Transverse colon (tissue), 4 donors: ENCODE measurements at regions of chr3 and their contacts with region 1.

Region 1: DNA sequence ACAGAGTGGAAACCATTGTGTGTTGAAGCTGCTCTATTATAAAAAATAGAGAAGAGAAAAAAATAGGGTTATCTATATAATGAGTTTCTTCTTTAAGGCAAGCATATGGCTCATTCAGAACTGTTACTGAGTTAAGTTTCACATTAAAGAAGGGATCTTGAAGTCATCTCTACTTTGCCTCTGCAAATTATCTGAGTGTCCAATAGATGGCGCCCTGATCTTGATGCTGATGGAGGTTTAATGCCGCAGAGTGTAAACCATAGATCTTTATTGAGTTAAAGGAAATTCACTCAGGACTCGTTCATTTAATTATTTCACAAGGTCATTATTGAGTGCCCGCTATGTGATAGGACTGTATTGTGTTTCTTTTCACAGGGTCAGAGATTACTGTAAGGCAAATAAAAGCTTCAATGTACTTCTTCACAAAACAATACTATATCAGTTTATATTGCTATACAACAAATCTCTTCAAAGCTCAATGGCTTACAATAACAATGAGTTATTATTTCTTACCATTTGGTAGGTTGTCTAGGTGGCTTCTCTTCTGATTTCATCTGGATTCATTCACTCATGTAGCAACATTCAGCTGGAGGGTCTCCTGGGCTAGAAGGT is 171.4 kb downstream of the NSUN3 start:
- DNase-seq: no peak
- H3K4me3 ChIP-seq: no peak overlapping the region
- H3K27ac ChIP-seq: no peak overlapping the region
- H3K4me1 ChIP-seq: no peaks in the 10 kb centered on the region
- H3K27me3 ChIP-seq: no peaks in the 10 kb centered on the region
- CTCF ChIP-seq: peak; percentile 34 to 53 (median 47)
- EP300 ChIP-seq: no peak
- POLR2A ChIP-seq: no peak

Region 2: DNA sequence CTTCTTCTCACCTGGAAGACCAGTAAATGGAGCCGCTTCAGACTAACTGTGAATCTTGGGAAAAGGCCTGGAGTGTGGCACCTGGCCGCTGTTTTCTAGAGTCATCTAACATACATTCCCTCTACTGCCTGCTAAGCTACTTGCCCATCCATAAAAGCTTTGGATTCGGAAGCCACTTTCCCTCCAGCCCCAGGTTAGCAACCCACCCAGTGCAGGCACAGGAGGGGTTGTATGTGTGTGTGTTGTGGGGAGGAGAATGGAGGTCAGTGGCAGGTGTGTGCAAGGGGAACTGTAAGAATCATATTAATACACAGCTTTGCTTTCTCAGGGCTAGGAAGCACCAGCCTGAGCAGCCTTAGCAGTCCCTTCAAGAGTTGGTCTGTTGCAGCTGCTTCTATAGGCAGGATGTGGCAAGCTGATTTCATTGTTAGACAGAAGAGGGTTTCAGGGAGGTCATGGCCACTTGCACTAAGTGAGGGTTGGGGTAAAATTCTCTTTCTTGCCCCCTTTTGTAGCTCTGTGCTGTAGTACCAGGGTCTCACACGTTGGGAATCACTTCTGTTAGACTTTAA is 162.5 kb before region 1 on chr3:
- in situ Hi-C with region 1: no loop called
- intact Hi-C with region 1: no loop called
- DNase-seq: no peak
- H3K4me3 ChIP-seq: no peak overlapping the region
- H3K27ac ChIP-seq: no peak overlapping the region
- H3K4me1 ChIP-seq: peaks cover 0 to 15% (median 0%) of the 10 kb centered on the region in 4 donors
- H3K27me3 ChIP-seq: no peaks in the 10 kb centered on the region
- CTCF ChIP-seq: no peak
- EP300 ChIP-seq: no peak
- POLR2A ChIP-seq: no peak

Region 3: DNA sequence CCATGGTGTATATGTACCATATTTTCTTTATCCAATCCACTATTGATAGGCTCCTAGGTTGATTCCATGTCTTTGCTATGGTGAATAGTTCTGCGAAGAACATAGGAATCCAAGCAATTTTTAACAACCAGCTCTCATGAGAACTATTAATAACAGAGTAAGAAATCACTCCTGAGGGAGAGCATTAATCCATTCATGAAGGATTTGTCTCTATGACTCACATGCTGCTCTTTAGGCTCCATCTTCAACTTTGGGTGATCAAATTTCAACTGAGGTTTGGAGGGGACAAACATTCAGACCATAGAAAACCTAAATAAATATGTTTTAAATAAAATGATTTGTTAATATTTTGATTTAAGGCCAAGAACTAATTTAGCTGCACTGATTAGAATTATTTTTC is 24.0 kb before region 1 on chr3:
- in situ Hi-C with region 1: no loop called
- intact Hi-C with region 1: loop called (anchors 1 kb)
- DNase-seq: no peak
- H3K4me3 ChIP-seq: no peak overlapping the region
- H3K27ac ChIP-seq: no peak overlapping the region
- H3K4me1 ChIP-seq: no peaks in the 10 kb centered on the region
- H3K27me3 ChIP-seq: no peaks in the 10 kb centered on the region
- CTCF ChIP-seq: no peak
- EP300 ChIP-seq: no peak
- POLR2A ChIP-seq: no peak

Region 4: DNA sequence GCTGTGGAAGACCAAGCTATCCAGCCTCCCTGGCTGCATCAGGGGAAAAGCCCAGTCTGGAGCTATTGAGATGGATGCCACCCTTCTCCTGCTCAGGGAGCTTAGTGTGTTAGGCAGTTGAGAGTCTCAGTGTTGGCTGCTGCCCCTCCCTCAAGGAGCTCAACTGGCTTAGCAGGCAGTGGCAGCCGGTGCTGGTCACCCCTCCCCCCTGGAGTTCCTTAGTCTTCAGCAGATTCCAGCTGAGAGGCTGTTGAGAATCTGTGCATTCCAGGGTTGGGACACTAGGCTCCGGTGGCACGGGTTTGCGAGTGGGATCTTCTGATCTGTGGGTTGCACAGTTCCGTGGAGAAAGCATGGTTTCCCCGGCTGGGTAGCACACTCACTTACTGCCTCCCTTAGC is 712.4 kb after region 1 on chr3:
- in situ Hi-C with region 1: no loop called
- intact Hi-C with region 1: no loop called
- DNase-seq: no peak
- H3K4me3 ChIP-seq: no peak overlapping the region
- H3K27ac ChIP-seq: no peak overlapping the region
- H3K4me1 ChIP-seq: no peaks in the 10 kb centered on the region
- H3K27me3 ChIP-seq: no peaks in the 10 kb centered on the region
- CTCF ChIP-seq: no peak
- EP300 ChIP-seq: no peak
- POLR2A ChIP-seq: no peak